ENCODE measurements at regions of chr14 and their contacts with region 1.

Region 1: GRCh38 chr14:70567791-70568190 is 32.7 kb downstream of the MED6 start:
- DNase-seq: peak; percentile 70
- ATAC-seq: peak; percentile 97
- H3K4me3 ChIP-seq: no peak overlapping the region
- H3K27ac ChIP-seq: no peak overlapping the region
- H3K4me1 ChIP-seq: no peaks in the 10 kb centered on the region
- H3K27me3 ChIP-seq: no peaks in the 10 kb centered on the region
- CTCF ChIP-seq: peak; percentile 90

Region 2: GRCh38 chr14:70416725-70417349 is 151.0 kb before region 1 on chr14 and contains the start of gene SYNJ2BP:
- CTCF ChIA-PET with region 1: no interaction called
- POLR2A ChIA-PET with region 1: no interaction called
- intact Hi-C with region 1: loop called (anchors 5 kb)
- DNase-seq: peak; percentile 93
- ATAC-seq: peak; percentile 99
- H3K4me3 ChIP-seq: peak within 1 kb of the TSS; percentile 81
- H3K27ac ChIP-seq: peak within 1 kb of the TSS; percentile 30
- H3K4me1 ChIP-seq: peaks cover 12% of the 10 kb centered on the region; the same call in 1 of the 2 replicates
- H3K27me3 ChIP-seq: no peaks in the 10 kb centered on the region
- CTCF ChIP-seq: no peak
- total RNA-seq, gene SYNJ2BP: 13.1 and 16.4 TPM in 2 replicates

Region 3: GRCh38 chr14:71138448-71139293 is 570.9 kb after region 1 on chr14:
- CTCF ChIA-PET with region 1: no interaction called
- POLR2A ChIA-PET with region 1: no interaction called
- intact Hi-C with region 1: no loop called
- DNase-seq: peak; percentile 80
- ATAC-seq: peak; percentile 27
- H3K4me3 ChIP-seq: 0 out of 2 replicates have a peak overlapping the region, but pooled peaks have one; percentile 10
- H3K27ac ChIP-seq: peak overlapping the region; percentile 15; the same call in 1 of the 2 replicates
- H3K4me1 ChIP-seq: peaks cover 33% of the 10 kb centered on the region
- H3K27me3 ChIP-seq: no peaks in the 10 kb centered on the region
- CTCF ChIP-seq: peak; percentile 99

Measured in PC-3 (cell line).